ENCODE measurements at regions of chr1 and their contacts with region 1.

Region 1: DNA sequence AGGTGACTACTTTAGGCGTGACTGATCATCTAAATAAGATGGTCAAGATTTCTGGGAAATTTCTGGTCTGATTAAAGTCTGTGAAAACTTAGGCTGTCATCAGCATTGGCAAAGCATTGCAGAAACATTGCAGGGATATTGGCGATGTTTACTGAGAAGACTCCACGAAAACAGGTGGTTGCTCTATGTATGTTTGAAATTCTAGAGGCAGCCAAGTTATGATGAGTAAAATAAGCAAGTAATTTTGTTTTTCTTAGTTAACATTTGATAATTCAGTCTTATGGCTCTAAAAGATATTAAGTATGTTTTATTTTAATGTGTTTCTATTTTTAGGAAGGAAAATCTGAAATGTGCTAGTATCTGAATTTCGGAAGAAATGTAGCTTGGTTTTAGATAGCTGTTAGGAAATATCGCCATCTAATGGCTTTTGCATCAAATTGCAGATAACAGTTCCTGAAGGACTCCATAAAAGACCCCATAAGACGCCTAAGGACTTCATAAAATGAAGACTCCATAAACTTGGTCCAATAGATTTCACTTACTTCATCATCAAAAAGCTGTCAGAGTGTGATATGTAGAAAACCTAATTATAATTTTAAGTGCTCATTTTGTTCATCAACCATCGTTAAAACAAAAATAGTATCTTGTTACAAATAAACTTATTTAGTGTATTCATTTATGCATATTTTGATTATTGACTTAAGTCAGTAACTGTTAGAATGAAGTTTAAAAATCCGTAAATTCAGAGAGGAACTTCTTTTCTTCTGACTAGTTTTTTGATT is 344.6 kb downstream of the RYR2 start:
- DNase-seq: no peak
- H3K4me3 Mint-ChIP-seq: no peak overlapping the region
- H3K27ac Mint-ChIP-seq: no peak overlapping the region
- H3K4me1 Mint-ChIP-seq: no peaks in the 10 kb centered on the region
- H3K27me3 Mint-ChIP-seq: no peaks in the 10 kb centered on the region
- CTCF ChIP-seq: peak; percentile 62

Region 2: GRCh38 chr1:236753516-236753915 is 633.0 kb before region 1 on chr1:
- CTCF ChIA-PET with region 1: interaction called, 25 read pairs
- intact Hi-C with region 1: loop called (anchors 2 kb)
- DNase-seq: peak; percentile 36
- H3K4me3 Mint-ChIP-seq: no peak overlapping the region
- H3K27ac Mint-ChIP-seq: no peak overlapping the region
- H3K4me1 Mint-ChIP-seq: no peaks in the 10 kb centered on the region
- H3K27me3 Mint-ChIP-seq: peaks cover under 1% of the 10 kb centered on the region
- CTCF ChIP-seq: peak; percentile 20

Region 3: DNA sequence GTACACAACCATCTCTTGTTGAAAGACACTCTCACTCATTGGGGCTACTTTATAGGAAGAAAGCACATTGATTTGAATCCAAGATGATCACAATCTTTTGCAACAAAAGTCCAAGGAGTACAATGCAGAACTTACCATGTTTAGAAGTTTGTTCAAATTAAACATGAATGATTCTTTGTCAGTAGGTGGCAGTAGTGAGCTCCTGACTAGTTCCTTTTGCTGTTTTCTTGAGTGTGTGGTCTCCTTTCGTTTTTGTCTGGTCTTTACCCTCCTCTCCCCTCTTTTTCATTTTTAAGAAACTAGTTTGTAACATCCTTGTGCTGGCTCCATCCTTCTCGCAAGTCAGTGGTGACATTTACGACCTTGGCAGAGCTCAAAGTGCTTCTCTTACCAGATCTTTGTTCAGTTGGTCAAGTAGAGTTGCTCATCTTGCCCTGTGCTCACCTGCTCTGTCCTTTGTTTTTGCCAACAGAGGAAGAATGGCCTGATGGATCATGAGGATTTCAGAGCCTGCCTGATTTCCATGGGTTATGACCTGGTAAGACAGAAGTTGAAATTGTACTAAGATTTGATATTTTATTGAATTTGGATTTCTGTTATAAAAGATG is 627.2 kb before region 1 on chr1:
- CTCF ChIA-PET with region 1: interaction called, 7 read pairs
- intact Hi-C with region 1: loop called (anchors 2 kb)
- DNase-seq: peak; percentile 12
- H3K4me3 Mint-ChIP-seq: no peak overlapping the region
- H3K27ac Mint-ChIP-seq: no peak overlapping the region
- H3K4me1 Mint-ChIP-seq: no peaks in the 10 kb centered on the region
- H3K27me3 Mint-ChIP-seq: no peaks in the 10 kb centered on the region
- CTCF ChIP-seq: peak; percentile 60